Transverse colon (tissue), 4 donors: ENCODE measurements at regions of chr5 and their contacts with region 1.

Region 1: GRCh38 chr5:117436846-117437245 is 862.2 kb upstream of the SEMA6A start:
- DNase-seq: no peak
- H3K4me3 ChIP-seq: no peak overlapping the region
- H3K27ac ChIP-seq: no peak overlapping the region
- H3K4me1 ChIP-seq: peaks cover 0 to 10% (median 0%) of the 10 kb centered on the region in 4 donors
- H3K27me3 ChIP-seq: no peaks in the 10 kb centered on the region
- CTCF ChIP-seq: no peak
- EP300 ChIP-seq: no peak
- POLR2A ChIP-seq: no peak

Region 2: GRCh38 chr5:117118499-117118898 is 318.3 kb before region 1 on chr5:
- in situ Hi-C with region 1: no loop called
- intact Hi-C with region 1: no loop called
- DNase-seq: no peak
- H3K4me3 ChIP-seq: no peak overlapping the region
- H3K27ac ChIP-seq: no peak overlapping the region
- H3K4me1 ChIP-seq: no peaks in the 10 kb centered on the region
- H3K27me3 ChIP-seq: no peaks in the 10 kb centered on the region
- CTCF ChIP-seq: no peak
- EP300 ChIP-seq: no peak
- POLR2A ChIP-seq: no peak

Region 3: DNA sequence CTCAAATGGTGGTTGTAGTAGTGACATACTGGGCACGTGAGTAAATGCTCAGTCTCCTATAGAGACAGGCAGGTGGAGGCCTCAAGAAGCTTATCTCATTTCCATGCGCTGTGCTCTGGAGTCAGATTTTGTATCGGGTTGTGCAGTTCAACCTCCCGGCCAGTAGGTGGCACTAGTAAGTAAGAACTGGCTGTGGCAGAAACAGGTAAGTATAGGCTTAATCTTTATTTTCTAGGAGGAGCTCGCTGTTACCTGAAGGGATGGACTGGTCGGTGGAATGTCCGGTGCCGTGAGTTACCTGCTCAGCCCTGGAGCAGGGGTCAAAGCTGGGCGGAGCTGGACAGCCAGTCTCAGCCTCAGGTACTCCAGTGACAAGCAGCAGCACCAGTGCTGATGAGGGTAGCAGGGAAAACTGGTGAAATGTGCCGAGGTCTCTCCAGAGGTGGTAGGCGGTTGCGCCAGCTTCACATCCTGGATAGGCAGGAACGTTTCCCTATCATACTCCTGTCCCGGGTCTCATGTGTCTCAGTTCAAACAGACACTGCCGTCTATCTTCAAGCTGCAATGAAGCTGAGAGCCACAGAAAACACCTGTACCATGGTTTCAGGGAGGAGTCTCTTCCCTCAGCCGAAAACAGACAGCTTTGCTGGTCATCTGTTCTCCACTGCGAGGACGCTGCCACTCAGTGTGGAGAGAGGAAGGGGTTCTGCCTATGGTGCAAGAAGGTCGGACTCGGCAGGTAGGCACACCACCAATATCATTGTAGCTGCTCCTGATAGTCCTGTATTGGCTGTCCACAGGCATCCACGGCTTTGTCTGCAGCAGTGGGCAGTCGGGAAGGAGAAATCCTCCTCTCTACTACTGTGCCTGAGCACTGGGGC is 18.1 kb after region 1 on chr5:
- in situ Hi-C with region 1: no loop called
- intact Hi-C with region 1: loop called (anchors 1 kb)
- DNase-seq: peak; percentile 74
- H3K4me3 ChIP-seq: peak overlapping the region in 3 of 4 donors; percentile 29 to 45 (median 36)
- H3K27ac ChIP-seq: peak overlapping the region; percentile 47 to 59 (median 49)
- H3K4me1 ChIP-seq: no peaks in the 10 kb centered on the region
- H3K27me3 ChIP-seq: no peaks in the 10 kb centered on the region
- CTCF ChIP-seq: peak; percentile 73 to 83 (median 78)
- EP300 ChIP-seq: no peak
- POLR2A ChIP-seq: no peak